HCT116 (cell line): ENCODE measurements at regions of chr9 and their contacts with region 1.

Region 1: GRCh38 chr9:84397151-84397728 is 56.7 kb upstream of the SLC28A3 start:
- DNase-seq: peak; percentile 58
- ATAC-seq: peak; percentile 95
- H3K4me3 ChIP-seq: no peak overlapping the region
- H3K27ac ChIP-seq: no peak overlapping the region
- H3K4me1 ChIP-seq: no peaks in the 10 kb centered on the region
- H3K27me3 ChIP-seq: 0 out of 2 replicates have a peak, but pooled peaks cover 4% of the 10 kb centered on the region
- CTCF ChIP-seq: peak; percentile 66 to 86 (median 85); a peak in 5 of 6 replicates
- POLR2A ChIP-seq: no peak
- RAD21 ChIP-seq: peak; percentile 89

Region 2: GRCh38 chr9:84461540-84461939 is 64.3 kb after region 1 on chr9:
- CTCF ChIA-PET with region 1: interaction called, 26 read pairs
- POLR2A ChIA-PET with region 1: no interaction called
- RAD21 ChIA-PET with region 1: interaction called in 1 of 2 experiments, 7 read pairs
- intact Hi-C with region 1: loop called (anchors 5 kb)
- DNase-seq: no peak
- ATAC-seq: peak; percentile 38; the same call in 1 of the 2 replicates
- H3K4me3 ChIP-seq: no peak overlapping the region
- H3K27ac ChIP-seq: no peak overlapping the region
- H3K4me1 ChIP-seq: no peaks in the 10 kb centered on the region
- H3K27me3 ChIP-seq: no peaks in the 10 kb centered on the region; the same call in 1 of the 2 replicates
- CTCF ChIP-seq: peak in 2 of 3 experiments; percentile 9 to 15; a peak in 1 of 6 replicates
- POLR2A ChIP-seq: no peak
- RAD21 ChIP-seq: peak; percentile 39

Region 3: DNA sequence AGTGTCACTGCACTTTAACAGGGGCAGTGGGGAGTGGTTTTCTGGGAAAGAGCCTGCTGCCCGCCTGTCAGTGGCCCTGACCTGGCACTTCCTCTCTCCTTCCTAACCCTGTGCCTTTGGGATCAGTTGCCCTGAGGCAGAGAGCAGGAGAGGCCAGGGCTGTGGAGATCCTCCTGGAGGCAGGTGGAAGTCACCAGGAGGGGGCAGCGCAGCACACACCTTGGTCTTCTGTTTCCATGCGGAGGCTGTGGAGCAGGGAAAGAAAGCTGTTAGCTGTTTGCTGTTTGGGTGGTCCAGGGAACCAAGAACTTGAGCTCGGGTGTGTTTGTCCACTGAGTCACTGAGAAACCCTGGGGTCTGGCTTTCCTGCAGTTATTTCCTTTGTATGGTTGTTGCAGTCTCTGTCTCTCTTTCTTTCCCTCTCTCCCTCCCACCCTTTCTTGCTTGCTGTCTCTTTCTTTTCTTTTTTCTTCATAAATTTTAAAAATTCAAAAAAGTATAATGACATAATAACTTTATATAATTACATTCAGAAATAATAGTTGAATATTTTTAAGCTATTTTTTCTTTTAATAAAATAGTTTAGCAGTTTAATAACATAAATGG is 300.4 kb after region 1 on chr9:
- CTCF ChIA-PET with region 1: interaction called, 12 read pairs
- POLR2A ChIA-PET with region 1: no interaction called
- RAD21 ChIA-PET with region 1: no interaction called
- intact Hi-C with region 1: no loop called
- DNase-seq: peak; percentile 32
- ATAC-seq: peak; percentile 98
- H3K4me3 ChIP-seq: no peak overlapping the region
- H3K27ac ChIP-seq: no peak overlapping the region
- H3K4me1 ChIP-seq: no peaks in the 10 kb centered on the region; a peak in 1 of 4 replicates
- H3K27me3 ChIP-seq: no peaks in the 10 kb centered on the region
- CTCF ChIP-seq: peak; percentile 54 to 83 (median 74); a peak in 5 of 6 replicates
- POLR2A ChIP-seq: no peak
- RAD21 ChIP-seq: peak; percentile 78

Region 4: DNA sequence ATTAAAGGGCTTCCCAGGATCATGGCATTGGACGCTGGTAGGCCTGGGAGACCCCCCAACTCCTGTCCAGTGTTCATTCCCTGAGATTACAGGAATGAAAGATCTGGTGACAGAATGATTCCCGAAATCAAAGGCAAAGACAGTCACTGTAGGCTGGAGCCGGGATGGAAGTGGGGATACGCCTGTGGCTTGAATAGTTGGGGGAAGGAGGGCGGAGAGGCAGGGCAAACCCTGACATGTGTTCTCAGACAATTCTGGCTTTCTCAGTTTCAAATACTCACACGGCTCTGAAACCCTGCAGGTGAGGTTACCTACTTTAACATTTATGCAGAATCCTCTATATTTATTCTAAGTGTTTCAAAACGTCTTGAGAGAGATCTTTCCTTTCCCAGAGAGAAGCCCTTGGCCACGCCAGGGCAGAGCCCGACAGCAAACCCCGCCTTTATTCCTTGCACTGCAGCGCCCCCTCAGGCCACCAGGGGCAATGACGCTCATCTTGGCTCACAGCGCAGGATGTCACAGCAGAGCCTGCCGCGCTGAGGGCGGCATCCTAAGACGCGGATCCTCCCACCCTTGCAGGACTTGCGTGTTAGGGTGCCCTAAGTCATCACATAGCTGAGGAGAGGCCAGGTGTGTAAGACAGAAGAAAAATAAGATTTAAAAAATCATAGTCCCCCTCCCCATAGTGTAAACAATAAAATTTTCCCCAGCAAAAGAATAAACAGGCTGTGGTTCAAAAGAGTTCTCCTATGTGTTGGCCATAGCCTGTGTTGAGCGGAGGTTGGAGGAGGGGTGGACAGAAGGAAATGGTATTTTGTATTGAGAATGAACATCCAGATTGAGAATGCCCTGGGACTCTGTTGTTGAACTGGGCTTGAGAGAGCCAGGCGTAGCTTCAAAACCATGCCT is 556.8 kb after region 1 on chr9:
- CTCF ChIA-PET with region 1: no interaction called
- POLR2A ChIA-PET with region 1: no interaction called
- RAD21 ChIA-PET with region 1: no interaction called
- intact Hi-C with region 1: loop called (anchors 5 kb)
- DNase-seq: peak; percentile 48
- ATAC-seq: peak; percentile 99
- H3K4me3 ChIP-seq: no peak overlapping the region
- H3K27ac ChIP-seq: no peak overlapping the region
- H3K4me1 ChIP-seq: 0 out of 4 replicates have a peak, but pooled peaks cover 0 to 3% of the 10 kb centered on the region in 2 experiments
- H3K27me3 ChIP-seq: no peaks in the 10 kb centered on the region
- CTCF ChIP-seq: peak; percentile 77 to 96 (median 96)
- POLR2A ChIP-seq: no peak
- RAD21 ChIP-seq: peak; percentile 78

Region 5: GRCh38 chr9:85258823-85259370 is 861.7 kb after region 1 on chr9:
- CTCF ChIA-PET with region 1: interaction called, 19 read pairs
- POLR2A ChIA-PET with region 1: no interaction called
- RAD21 ChIA-PET with region 1: interaction called in 1 of 2 experiments, 3 read pairs
- intact Hi-C with region 1: loop called (anchors 2 kb)
- DNase-seq: peak; percentile 63
- ATAC-seq: peak; percentile 100
- H3K4me3 ChIP-seq: no peak overlapping the region
- H3K27ac ChIP-seq: no peak overlapping the region
- H3K4me1 ChIP-seq: peaks cover 0 to 11% of the 10 kb centered on the region in 2 experiments; a peak in 1 of 4 replicates
- H3K27me3 ChIP-seq: 0 out of 2 replicates have a peak, but pooled peaks cover 6% of the 10 kb centered on the region
- CTCF ChIP-seq: peak; percentile 64 to 83 (median 82); a peak in 5 of 6 replicates
- POLR2A ChIP-seq: no peak
- RAD21 ChIP-seq: peak; percentile 90

Region 6: GRCh38 chr9:85610074-85610860 is 1213.0 kb after region 1 on chr9:
- CTCF ChIA-PET with region 1: interaction called, 13 read pairs
- POLR2A ChIA-PET with region 1: no interaction called
- RAD21 ChIA-PET with region 1: interaction called, 3 read pairs
- intact Hi-C with region 1: loop called (anchors 10 kb)
- DNase-seq: peak; percentile 51
- ATAC-seq: peak; percentile 76
- H3K4me3 ChIP-seq: no peak overlapping the region
- H3K27ac ChIP-seq: no peak overlapping the region
- H3K4me1 ChIP-seq: no peaks in the 10 kb centered on the region
- H3K27me3 ChIP-seq: no peaks in the 10 kb centered on the region
- CTCF ChIP-seq: peak; percentile 67 to 89 (median 71)
- POLR2A ChIP-seq: no peak
- RAD21 ChIP-seq: peak; percentile 82